A673 (cell line): ENCODE measurements at regions of chr7 and their contacts with region 1.

Region 1: DNA sequence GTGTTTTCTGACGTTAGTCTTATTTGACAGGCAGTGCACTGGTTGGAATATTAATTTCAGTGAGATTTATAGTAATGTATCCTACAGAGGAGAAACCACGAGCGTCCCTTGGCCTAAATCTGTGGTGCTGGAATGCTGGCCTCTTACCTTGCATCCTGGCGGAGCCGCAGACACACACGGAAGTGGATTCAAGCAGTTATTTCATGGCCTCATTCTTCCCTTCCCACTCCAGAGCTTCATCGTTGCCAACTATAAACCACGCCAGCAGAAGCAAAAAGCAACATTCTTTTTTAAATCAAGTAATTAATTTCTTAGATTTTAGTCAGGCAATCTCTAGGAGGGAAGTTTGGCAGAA is 13.1 kb downstream of the WIPI2 start:
- DNase-seq: no peak
- H3K4me3 ChIP-seq: no peak overlapping the region
- H3K27ac ChIP-seq: no peak overlapping the region
- H3K4me1 ChIP-seq: no peaks in the 10 kb centered on the region
- H3K27me3 ChIP-seq: no peaks in the 10 kb centered on the region
- CTCF ChIP-seq: no peak

Region 2: GRCh38 chr7:5383314-5384098 is 180.3 kb after region 1 on chr7:
- CTCF ChIA-PET with region 1: interaction called, 11 read pairs
- POLR2A ChIA-PET with region 1: no interaction called
- intact Hi-C with region 1: no loop called
- DNase-seq: no peak
- H3K4me3 ChIP-seq: no peak overlapping the region
- H3K27ac ChIP-seq: peak overlapping the region; percentile 69
- H3K4me1 ChIP-seq: peaks cover 19% of the 10 kb centered on the region
- H3K27me3 ChIP-seq: no peaks in the 10 kb centered on the region
- CTCF ChIP-seq: no peak